ENCODE measurements at regions of chr18 and their contacts with region 1.

Region 1: DNA sequence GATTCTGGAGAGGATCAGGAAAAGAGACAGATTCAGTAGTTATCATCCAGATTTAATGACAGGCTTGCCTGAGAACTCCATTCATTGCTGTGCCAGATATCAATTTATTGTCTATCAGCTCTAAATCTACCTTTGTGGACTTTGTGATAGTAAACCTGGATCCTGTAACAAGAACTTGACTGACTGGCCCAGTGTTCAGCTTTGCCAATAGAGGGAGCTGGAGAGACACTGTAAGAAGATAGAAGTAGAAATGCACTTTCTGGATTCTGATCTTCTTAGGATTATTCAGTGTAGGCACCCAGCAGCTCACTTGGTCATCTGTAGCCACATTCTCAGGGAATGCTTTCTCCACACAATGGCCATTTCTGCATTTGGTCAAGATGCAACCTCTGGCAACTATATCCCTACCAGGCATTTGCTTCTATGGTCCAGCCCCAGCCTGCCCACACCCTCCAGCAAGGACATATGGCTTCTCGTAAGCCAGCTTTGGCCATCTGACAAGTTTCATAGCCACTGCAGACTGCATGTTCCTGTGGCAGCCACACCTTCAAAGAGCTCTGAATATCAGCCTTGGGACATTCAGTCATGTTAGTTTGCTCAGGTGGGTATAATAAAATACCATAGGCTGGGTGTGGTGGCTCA is 6.1 kb upstream of the SERPINB8 start:
- DNase-seq: peak; percentile 77
- ATAC-seq: peak; percentile 97
- H3K4me3 ChIP-seq: no peak overlapping the region
- H3K27ac ChIP-seq: no peak overlapping the region
- H3K4me1 ChIP-seq: peaks cover 2% of the 10 kb centered on the region; the same call in 1 of the 2 replicates
- H3K27me3 ChIP-seq: peaks cover 23% of the 10 kb centered on the region
- CTCF ChIP-seq: peak; percentile 86
- POLR2A ChIP-seq: no peak
- RAD21 ChIP-seq: peak; percentile 72

Region 2: DNA sequence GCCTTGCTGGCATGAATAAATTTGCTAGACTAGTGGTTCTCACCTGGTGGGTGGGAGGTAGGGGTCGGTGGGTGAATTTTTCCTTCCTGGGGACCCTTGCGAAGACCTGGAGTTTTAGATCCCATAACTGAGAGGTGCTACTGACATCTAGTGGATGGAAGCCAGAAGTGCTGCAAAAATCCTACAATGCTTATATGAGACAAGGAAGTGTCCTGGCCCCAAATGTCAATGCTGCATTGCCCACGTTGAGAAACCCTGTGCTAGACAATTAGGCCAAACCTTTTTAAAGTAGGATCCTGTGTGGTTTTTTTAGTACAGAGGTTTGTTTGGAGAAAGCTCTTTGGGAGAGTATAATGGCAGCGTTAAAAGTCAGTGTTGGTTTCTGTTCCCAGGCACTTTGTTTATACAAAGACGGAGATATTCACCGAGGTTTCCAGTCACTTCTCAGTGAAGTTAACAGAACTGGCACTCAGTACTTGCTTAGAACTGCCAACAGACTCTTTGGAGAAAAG is 15.7 kb after region 1 on chr18:
- CTCF ChIA-PET with region 1: interaction called, 20 read pairs
- POLR2A ChIA-PET with region 1: no interaction called
- dilution Hi-C with region 1: no loop called
- in situ Hi-C with region 1: no loop called
- intact Hi-C with region 1: no loop called
- DNase-seq: peak; percentile 70
- ATAC-seq: peak; percentile 92
- H3K4me3 ChIP-seq: peak overlapping the region; percentile 37; the same call in 1 of the 2 replicates
- H3K27ac ChIP-seq: peak overlapping the region; percentile 68
- H3K4me1 ChIP-seq: 0 out of 2 replicates have a peak, but pooled peaks cover 2% of the 10 kb centered on the region
- H3K27me3 ChIP-seq: no peaks in the 10 kb centered on the region
- CTCF ChIP-seq: peak; percentile 86
- POLR2A ChIP-seq: no peak
- RAD21 ChIP-seq: peak; percentile 59

Region 3: GRCh38 chr18:63994783-63995399 is 31.2 kb after region 1 on chr18:
- CTCF ChIA-PET with region 1: interaction called, 5 read pairs
- POLR2A ChIA-PET with region 1: no interaction called
- dilution Hi-C with region 1: no loop called
- in situ Hi-C with region 1: no loop called
- intact Hi-C with region 1: loop called (anchors 1 kb)
- DNase-seq: peak; percentile 61
- ATAC-seq: peak; percentile 94
- H3K4me3 ChIP-seq: no peak overlapping the region
- H3K27ac ChIP-seq: no peak overlapping the region
- H3K4me1 ChIP-seq: no peaks in the 10 kb centered on the region
- H3K27me3 ChIP-seq: no peaks in the 10 kb centered on the region
- CTCF ChIP-seq: peak; percentile 89
- POLR2A ChIP-seq: no peak
- RAD21 ChIP-seq: peak; percentile 73

Measured in IMR-90 (cell line).